ENCODE measurements at regions of chr3 and their contacts with region 1.

Region 1: GRCh38 chr3:5057857-5058324 is 64.2 kb upstream of the ARL8B start:
- DNase-seq: peak; percentile 93
- H3K4me3 ChIP-seq: no peak overlapping the region; the same call in 1 of the 2 replicates
- H3K27ac ChIP-seq: peak overlapping the region; percentile 92
- H3K4me1 ChIP-seq: peaks cover 44% of the 10 kb centered on the region
- H3K27me3 ChIP-seq: no peaks in the 10 kb centered on the region

Region 2: DNA sequence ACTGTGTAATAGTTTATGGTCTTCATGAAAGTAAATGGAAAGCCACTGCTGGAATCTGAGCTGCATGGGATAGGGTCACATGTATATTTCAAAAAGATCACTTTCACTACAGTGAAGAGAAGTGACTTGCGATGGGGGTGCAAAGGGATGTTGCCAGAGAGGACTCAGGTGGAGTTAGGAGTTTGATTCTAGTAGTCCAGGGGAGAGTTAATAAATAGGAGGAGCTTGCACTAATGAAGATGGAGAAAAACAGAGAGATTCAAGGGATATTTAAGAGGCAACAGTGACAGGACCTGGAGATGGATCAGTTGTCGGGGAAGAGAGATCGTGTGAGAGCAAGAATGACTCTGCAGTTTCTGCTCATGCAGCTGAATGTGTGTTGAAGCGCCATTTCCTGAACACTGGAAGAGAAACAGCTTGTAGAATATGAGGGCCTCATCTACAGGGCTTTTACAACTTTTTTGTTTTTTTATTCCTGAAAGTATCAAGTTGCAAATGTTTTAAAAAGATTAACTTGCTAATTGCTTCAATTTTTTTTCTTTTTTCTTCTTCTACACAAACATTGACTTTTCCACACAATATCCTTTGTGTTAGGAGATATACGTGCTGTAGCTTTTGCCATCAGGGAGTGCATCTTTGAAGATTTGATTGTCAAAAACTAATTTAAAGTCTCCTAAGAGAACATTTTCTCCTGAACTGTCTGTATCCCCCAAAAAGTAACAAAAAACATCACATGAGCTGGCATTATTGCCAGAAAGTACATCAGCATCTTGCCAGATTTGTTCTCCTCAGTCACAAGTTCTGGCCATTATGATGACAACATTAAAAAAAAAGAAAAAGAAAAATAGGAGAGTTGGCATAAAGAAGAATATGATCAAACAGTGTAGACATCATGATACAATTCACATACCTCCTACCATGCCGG is 717.2 kb before region 1 on chr3:
- in situ Hi-C with region 1: loop called (anchors 25 kb)
- DNase-seq: peak; percentile 15
- H3K4me3 ChIP-seq: no peak overlapping the region
- H3K27ac ChIP-seq: no peak overlapping the region
- H3K4me1 ChIP-seq: peaks cover 14% of the 10 kb centered on the region
- H3K27me3 ChIP-seq: no peaks in the 10 kb centered on the region

Region 3: GRCh38 chr3:4712143-4712542 is 345.7 kb before region 1 on chr3:
- in situ Hi-C with region 1: loop called (anchors 5 kb)
- DNase-seq: peak; percentile 90
- H3K4me3 ChIP-seq: no peak overlapping the region
- H3K27ac ChIP-seq: peak overlapping the region; percentile 73
- H3K4me1 ChIP-seq: peaks cover 30% of the 10 kb centered on the region
- H3K27me3 ChIP-seq: no peaks in the 10 kb centered on the region

Region 4: DNA sequence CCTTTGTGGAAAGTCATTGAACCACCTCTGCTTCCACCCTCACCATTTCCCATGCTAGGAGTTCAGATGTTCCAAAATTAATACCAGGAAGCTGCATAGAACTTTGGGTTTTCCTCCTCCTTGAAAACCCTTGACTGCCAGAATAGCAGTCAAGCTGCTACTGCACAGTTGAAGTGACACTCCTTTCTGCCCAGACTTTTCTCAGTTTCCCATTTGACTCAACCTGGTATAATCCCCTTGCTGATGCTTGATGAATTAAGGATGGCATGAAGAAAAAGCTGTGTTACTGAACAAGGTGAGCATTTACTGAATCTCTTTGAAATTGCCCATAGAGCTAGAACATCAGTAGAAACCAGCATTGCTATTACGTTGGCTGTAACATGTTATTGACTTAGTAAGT is 415.6 kb after region 1 on chr3:
- in situ Hi-C with region 1: no loop called
- DNase-seq: no peak
- H3K4me3 ChIP-seq: no peak overlapping the region
- H3K27ac ChIP-seq: no peak overlapping the region
- H3K4me1 ChIP-seq: no peaks in the 10 kb centered on the region
- H3K27me3 ChIP-seq: no peaks in the 10 kb centered on the region